ENCODE measurements at regions of chrX and their contacts with region 1.

Region 1: GRCh38 chrX:134782796-134783195 is 124.5 kb upstream of the PLAC1 start:
- DNase-seq: peak; percentile 54
- H3K4me3 ChIP-seq: no peak overlapping the region
- H3K27ac ChIP-seq: no peak overlapping the region
- H3K4me1 ChIP-seq: no peaks in the 10 kb centered on the region
- H3K27me3 ChIP-seq: no peaks in the 10 kb centered on the region
- CTCF ChIP-seq: peak; percentile 58

Region 2: DNA sequence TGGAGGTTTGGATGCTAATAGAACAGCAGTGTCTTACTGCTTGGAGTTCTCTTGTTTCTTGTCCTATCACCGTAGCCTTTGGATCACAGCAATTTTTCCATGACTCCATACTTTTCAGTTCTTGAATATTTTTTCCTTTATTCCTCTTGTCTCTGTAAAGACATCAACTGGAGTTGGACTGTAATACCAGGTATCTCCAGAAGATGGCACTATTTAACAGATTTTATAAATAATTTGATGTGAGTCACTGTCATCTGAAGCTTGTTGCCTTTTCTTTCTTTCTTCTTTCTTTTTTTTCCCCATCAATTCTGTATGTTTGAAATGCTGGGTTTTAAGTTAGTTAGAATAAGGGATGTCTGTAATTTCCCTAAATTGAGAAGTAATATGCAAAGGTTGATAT is 298.8 kb before region 1 on chrX:
- CTCF ChIA-PET with region 1: interaction called, 8 read pairs
- POLR2A ChIA-PET with region 1: no interaction called
- intact Hi-C with region 1: loop called (anchors 2 kb)
- DNase-seq: peak; percentile 64
- H3K4me3 ChIP-seq: no peak overlapping the region
- H3K27ac ChIP-seq: no peak overlapping the region
- H3K4me1 ChIP-seq: no peaks in the 10 kb centered on the region
- H3K27me3 ChIP-seq: no peaks in the 10 kb centered on the region
- CTCF ChIP-seq: peak; percentile 67

Region 3: GRCh38 chrX:134908356-134908755 is 125.6 kb after region 1 on chrX:
- CTCF ChIA-PET with region 1: no interaction called
- POLR2A ChIA-PET with region 1: no interaction called
- intact Hi-C with region 1: loop called (anchors 5 kb)
- DNase-seq: peak; percentile 42
- H3K4me3 ChIP-seq: no peak overlapping the region
- H3K27ac ChIP-seq: no peak overlapping the region
- H3K4me1 ChIP-seq: no peaks in the 10 kb centered on the region
- H3K27me3 ChIP-seq: no peaks in the 10 kb centered on the region
- CTCF ChIP-seq: peak; percentile 40

Measured in A673 (cell line).